ENCODE measurements at regions of chr2 and their contacts with region 1.

Region 1: DNA sequence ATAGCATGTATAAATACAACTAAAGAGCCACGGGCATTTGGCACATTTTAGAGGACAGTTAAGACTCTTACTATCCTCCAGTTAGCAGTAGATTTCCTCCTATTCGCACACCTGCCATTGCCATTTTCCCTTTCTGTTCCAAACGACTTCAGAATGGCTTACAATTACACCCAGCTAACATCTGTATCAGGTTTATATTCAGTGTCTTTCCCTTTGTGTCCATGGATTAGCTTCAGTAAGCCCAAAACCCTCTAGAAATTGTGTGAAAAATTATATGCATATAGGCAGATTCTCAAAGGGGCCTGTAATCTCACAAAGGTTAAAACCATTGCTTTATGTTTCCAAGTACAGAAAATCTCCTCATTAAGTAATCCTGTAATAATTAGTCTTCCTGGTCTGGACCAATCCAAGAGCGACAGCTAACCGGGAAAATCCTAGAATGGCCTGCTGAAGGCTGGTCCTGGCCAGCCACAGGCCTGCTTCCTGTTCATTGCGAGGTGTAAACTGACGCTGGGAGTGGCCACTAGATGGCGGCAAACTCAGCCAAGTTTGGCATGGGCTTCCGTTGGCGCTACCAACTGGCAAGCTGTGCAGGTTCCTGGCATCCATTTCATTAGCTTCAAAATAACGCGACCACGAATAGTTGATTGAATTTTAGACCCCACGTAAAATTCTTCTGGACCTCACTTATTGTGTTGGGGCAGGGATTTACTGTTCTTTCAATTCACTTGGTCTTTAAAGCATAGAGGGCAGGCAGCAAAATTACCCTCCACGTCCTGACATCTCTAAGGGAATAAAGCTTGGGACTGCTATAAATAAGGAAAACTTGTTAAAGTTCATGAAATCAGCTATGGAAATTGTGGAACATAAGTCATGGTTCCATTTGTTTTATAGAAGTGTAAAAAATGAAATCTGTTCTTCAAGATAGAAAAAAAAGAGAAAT is 17.1 kb downstream of the ARHGAP25 start:
- DNase-seq: peak; percentile 82 to 91
- ATAC-seq: peak; percentile 99 to 100
- H3K4me3 ChIP-seq: no peak overlapping the region
- H3K27ac ChIP-seq: no peak overlapping the region
- H3K4me1 ChIP-seq: no peaks in the 10 kb centered on the region
- CTCF ChIP-seq: peak; percentile 98
- EP300 ChIP-seq: no peak
- POLR2A ChIP-seq: no peak
- RAD21 ChIP-seq: peak; percentile 92 to 93

Region 2: DNA sequence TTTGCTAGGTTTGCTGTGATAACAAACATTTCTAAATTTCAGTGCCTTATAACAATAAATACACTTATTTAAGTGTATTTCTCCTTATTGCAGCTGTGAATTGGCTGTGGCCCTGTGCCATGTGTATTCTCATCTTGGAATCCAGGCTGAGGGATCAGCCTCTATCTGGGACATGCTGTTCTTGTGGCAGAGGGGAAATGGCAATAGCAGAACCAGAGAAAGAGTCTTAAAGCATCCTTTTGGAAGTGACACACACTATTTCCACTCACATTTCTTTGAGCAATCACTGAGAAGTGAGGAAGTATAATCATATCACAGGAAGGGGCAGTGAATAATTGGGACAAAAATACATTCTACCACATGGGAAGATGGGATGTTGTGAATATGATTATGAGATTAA is 174.5 kb before region 1 on chr2:
- CTCF ChIA-PET with region 1: no interaction called
- POLR2A ChIA-PET with region 1: no interaction called
- DNase-seq: no peak
- ATAC-seq: no peak
- H3K4me3 ChIP-seq: no peak overlapping the region
- H3K27ac ChIP-seq: no peak overlapping the region
- H3K4me1 ChIP-seq: no peaks in the 10 kb centered on the region
- CTCF ChIP-seq: no peak
- EP300 ChIP-seq: no peak
- POLR2A ChIP-seq: no peak
- RAD21 ChIP-seq: no peak

Region 3: GRCh38 chr2:68709421-68709911 is 42.2 kb before region 1 on chr2:
- CTCF ChIA-PET with region 1: interaction called, 16 read pairs
- POLR2A ChIA-PET with region 1: no interaction called
- DNase-seq: peak; percentile 62 to 70
- ATAC-seq: peak; percentile 94 to 98
- H3K4me3 ChIP-seq: no peak overlapping the region
- H3K27ac ChIP-seq: no peak overlapping the region
- H3K4me1 ChIP-seq: 0 out of 3 replicates have a peak, but pooled peaks cover 4% of the 10 kb centered on the region
- CTCF ChIP-seq: peak; percentile 89
- EP300 ChIP-seq: no peak
- POLR2A ChIP-seq: no peak
- RAD21 ChIP-seq: peak; percentile 77

Region 4: DNA sequence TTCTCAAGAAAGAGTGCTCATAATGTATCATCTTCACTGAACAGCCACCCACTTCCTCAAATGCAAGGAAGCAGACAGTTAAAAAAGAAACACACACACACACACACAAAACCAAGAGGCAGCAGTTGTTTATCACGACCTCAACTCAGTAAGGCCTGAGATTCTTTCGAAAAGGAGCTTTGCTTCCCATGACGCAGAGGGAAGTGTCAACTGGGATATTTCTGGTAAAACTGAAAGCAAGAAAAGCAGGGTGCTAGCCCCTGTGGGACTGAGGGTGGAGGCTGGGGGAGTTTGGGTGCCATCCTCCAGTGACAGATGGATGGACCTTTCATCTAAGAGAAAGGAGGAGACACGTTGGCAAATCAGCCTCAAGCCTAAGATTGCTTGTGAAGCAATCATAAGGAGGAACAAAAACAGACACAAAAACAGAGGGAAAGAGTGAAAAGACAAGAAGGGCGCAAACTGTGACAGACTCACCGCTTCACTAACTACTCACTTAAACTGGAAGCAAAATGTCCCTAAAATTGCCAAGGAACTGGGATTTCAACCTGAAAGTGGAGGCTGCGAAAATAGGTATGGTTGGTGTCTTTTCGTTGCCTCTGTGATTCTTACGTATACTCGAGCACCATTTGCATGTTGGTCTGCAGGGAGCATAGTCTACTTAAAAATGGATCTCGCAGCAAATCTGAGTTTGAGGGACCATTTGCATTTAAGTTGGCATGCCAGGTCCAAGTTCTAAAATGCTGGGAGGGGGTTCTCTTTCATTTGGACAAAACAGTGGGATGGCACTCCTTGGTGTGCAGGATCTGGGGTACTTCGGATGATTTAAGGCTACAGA is 16.8 kb before region 1 on chr2 and contains the start of gene ARHGAP25:
- CTCF ChIA-PET with region 1: interaction called, 48 read pairs
- POLR2A ChIA-PET with region 1: no interaction called
- DNase-seq: no peak
- ATAC-seq: no peak
- H3K4me3 ChIP-seq: no peak within 1 kb of the TSS
- H3K27ac ChIP-seq: no peak within 1 kb of the TSS
- H3K4me1 ChIP-seq: peaks cover 5% of the 10 kb centered on the region; the same call in 1 of the 3 replicates
- CTCF ChIP-seq: no peak
- EP300 ChIP-seq: no peak
- POLR2A ChIP-seq: no peak
- RAD21 ChIP-seq: no peak
- polyA plus RNA-seq, gene ARHGAP25: 2.2 and 2.4 TPM in 2 replicates

Region 5: DNA sequence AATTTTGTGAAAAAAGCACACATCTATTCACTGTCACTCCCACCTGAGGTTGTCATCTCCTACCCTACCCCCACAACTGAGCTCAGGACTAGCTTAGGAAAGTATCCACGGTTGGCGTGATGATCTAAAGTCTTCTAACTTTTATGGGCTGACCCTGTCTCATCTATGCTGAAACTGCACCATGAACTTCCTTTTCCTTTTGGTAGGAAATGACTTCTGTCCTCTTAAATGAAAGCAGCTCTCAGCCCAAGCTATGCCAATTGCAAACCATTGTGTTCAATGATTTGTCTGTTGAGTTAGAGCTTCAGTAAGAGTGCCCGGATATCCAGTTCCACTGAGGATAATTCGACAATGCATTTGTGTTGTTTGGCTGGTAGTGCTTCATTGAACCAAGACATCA is 35.7 kb after region 1 on chr2:
- CTCF ChIA-PET with region 1: interaction called, 10 read pairs
- POLR2A ChIA-PET with region 1: no interaction called
- DNase-seq: no peak
- ATAC-seq: no peak
- H3K4me3 ChIP-seq: no peak overlapping the region
- H3K27ac ChIP-seq: no peak overlapping the region
- H3K4me1 ChIP-seq: no peaks in the 10 kb centered on the region
- CTCF ChIP-seq: no peak
- EP300 ChIP-seq: no peak
- POLR2A ChIP-seq: no peak
- RAD21 ChIP-seq: no peak

Region 6: GRCh38 chr2:68878753-68879152 is 127.1 kb after region 1 on chr2:
- CTCF ChIA-PET with region 1: interaction called, 15 read pairs
- POLR2A ChIA-PET with region 1: no interaction called
- DNase-seq: no peak
- ATAC-seq: no peak
- H3K4me3 ChIP-seq: no peak overlapping the region
- H3K27ac ChIP-seq: no peak overlapping the region
- H3K4me1 ChIP-seq: 0 out of 3 replicates have a peak, but pooled peaks cover 8% of the 10 kb centered on the region
- CTCF ChIP-seq: no peak
- EP300 ChIP-seq: no peak
- POLR2A ChIP-seq: no peak
- RAD21 ChIP-seq: no peak

Region 7: GRCh38 chr2:68925295-68925896 is 173.7 kb after region 1 on chr2:
- CTCF ChIA-PET with region 1: interaction called, 227 read pairs
- POLR2A ChIA-PET with region 1: no interaction called
- DNase-seq: peak; percentile 68 to 78
- ATAC-seq: peak; percentile 72 to 86; a peak in 5 of 6 replicates
- H3K4me3 ChIP-seq: no peak overlapping the region
- H3K27ac ChIP-seq: peak overlapping the region in 1 of 2 experiments; percentile 72; a peak in 2 of 6 replicates
- H3K4me1 ChIP-seq: peaks cover 23% of the 10 kb centered on the region
- CTCF ChIP-seq: peak; percentile 98
- EP300 ChIP-seq: no peak
- POLR2A ChIP-seq: no peak
- RAD21 ChIP-seq: peak; percentile 97

Region 8: DNA sequence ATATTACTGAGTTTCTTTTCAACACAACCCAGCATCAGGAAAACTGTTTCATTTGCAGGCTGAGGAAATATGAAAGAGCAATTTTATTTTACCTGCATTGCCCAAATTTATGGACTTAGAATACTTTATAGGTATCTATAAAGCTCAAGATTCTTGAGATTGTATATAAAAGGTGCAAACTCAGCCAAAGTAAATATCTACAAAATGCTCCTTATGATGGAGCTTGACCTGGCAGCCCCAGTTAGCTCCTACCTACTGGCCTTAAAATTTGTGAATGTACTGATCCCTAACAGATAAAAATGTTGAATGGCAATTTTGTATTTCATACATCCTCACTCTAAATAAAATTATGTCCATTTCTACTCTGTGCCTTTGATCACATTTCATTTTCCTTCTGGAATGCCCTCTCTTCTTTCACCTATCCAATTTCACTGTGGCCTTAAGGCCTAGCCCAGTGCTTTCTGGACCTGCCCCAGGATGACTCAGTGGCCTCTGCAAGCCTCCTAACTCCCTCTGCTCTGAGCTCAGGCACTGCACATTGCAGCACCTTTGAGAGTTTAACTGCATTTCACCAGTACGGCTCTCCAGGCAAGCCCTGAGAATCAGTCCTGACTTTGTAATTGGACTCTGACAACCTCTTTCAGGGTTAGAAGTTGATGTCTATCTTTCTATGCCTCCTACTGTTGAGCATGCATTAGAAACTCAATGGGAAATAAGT is 387.3 kb after region 1 on chr2:
- CTCF ChIA-PET with region 1: no interaction called
- POLR2A ChIA-PET with region 1: no interaction called
- DNase-seq: peak; percentile 37 to 65
- ATAC-seq: peak; percentile 85 to 90
- H3K4me3 ChIP-seq: no peak overlapping the region
- H3K27ac ChIP-seq: peak overlapping the region; percentile 57 to 79
- H3K4me1 ChIP-seq: peaks cover 68% of the 10 kb centered on the region
- CTCF ChIP-seq: no peak
- EP300 ChIP-seq: no peak
- POLR2A ChIP-seq: no peak
- RAD21 ChIP-seq: no peak

Measured in A549 (cell line).